PC-9 (cell line): ENCODE measurements at regions of chr18 and their contacts with region 1.

Region 1: DNA sequence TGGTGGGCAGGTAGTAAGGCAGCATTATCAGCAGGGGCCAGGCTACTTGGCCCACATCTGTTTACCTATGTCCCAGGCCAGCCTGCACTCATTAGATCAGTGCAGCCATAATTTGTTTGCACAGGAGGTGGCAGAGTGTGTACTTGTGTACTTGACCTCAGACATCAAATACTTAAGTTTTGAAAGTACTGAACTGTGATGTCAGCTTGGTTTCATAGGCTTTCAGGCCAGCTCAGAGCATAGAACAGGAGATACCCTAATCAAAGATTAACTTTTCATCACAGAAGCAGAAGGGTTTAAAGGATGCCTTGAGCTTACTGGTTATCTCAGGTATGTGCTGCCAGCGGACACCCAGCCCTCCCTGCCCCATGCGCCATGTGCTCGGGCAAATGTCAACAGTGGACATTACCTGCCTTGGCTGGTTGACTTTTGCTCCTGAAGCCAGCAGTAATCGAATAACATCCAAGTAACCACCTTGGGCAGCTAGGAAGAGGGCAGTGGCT is 33.2 kb downstream of the ANKRD29 start:
- DNase-seq: peak in 1 of 2 experiments; percentile 71
- H3K4me3 ChIP-seq: no peak overlapping the region
- H3K27ac ChIP-seq: 0 out of 2 replicates have a peak overlapping the region, but pooled peaks have one; percentile 41
- H3K4me1 ChIP-seq: peaks cover 57% of the 10 kb centered on the region
- H3K27me3 ChIP-seq: no peaks in the 10 kb centered on the region
- CTCF ChIP-seq: no peak

Region 2: DNA sequence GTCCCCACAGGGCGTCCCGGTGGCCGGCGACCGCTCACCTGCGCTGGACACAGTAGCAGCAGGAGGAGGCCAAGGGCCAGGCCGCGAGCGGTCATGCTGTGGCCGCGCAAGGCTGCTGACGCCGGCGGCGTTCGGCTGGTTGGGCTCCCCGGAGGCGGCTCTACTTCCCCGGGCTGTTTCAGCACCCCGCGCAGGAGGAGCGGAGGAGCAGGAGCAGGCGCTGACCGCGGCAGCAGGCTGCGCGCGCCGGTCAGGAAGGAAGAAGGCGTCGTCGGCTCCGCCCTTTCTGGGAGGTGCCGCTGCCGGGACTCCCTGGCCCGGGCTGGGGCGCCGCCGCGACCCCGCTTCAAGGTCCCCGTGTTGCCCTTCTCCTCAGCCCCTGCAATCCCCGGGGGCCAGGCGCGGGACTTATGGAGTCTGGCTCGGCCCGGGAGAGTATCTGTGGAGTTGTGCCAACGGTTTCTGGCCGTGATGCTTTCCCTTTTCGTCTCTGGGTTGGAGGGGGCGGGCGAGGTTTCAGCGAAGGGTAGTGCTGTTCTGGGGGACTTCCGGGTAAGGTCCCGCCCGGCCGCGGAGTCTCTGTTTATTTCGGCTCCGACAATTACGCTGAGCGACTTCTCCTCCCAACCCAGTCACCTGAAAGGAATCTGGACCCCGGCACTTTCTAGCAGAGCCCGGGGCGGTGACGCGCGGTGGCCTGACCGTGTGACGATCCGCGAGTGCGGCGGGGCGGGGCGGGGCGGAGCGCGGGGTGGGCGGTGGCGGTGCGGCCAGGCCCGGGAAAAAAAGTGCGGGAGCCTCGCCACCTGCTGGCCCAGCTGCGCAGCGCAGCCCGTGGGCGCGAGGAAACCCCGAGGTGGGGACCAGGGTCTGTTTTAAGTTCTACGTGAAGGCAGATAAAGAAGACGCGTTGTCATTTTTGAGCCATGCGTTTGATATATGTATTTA is 43.0 kb before region 1 on chr18 and contains the start of gene NPC1:
- CTCF ChIA-PET with region 1: no interaction called
- POLR2A ChIA-PET with region 1: no interaction called
- intact Hi-C with region 1: no loop called
- DNase-seq: peak; percentile 88 to 92
- H3K4me3 ChIP-seq: peak within 1 kb of the TSS; percentile 82
- H3K27ac ChIP-seq: peak within 1 kb of the TSS; percentile 97
- H3K4me1 ChIP-seq: peaks cover 19% of the 10 kb centered on the region
- H3K27me3 ChIP-seq: no peaks in the 10 kb centered on the region
- CTCF ChIP-seq: peak; percentile 75
- total RNA-seq, gene NPC1: 39.6 and 40.9 TPM in 2 replicates

Region 3: GRCh38 chr18:23662309-23663263 is 33.1 kb after region 1 on chr18 and contains the start of gene ANKRD29:
- CTCF ChIA-PET with region 1: no interaction called
- POLR2A ChIA-PET with region 1: no interaction called
- intact Hi-C with region 1: loop called (anchors 5 kb)
- DNase-seq: peak in 1 of 2 experiments; percentile 40
- H3K4me3 ChIP-seq: peak within 1 kb of the TSS; percentile 60
- H3K27ac ChIP-seq: no peak within 1 kb of the TSS
- H3K4me1 ChIP-seq: peaks cover 13% of the 10 kb centered on the region
- H3K27me3 ChIP-seq: no peaks in the 10 kb centered on the region
- CTCF ChIP-seq: no peak
- total RNA-seq, gene ANKRD29: 4.3 and 4.6 TPM in 2 replicates